ENCODE measurements at regions of chr4 and their contacts with region 1.

Region 1: DNA sequence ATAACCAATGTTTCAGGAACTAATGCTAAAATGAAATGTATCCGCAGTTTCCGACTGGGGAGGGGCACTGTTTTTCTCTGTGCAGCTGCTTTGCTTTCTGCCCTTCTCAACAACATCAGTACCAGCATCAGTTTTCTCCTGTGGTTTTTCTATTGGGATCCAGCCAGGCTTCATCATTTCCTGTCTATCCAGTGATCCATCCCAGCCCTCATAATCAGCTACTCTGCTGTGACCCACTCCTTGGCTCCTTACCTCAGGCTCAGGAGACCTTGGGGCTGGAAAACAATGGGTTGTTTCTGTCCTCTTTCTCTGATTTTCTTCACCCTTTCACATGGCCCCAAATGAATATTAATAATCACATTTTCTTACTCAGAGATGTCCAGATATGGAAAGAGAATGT is 222.2 kb upstream of the DKK2 start:
- DNase-seq: no peak
- H3K4me3 Mint-ChIP-seq: no peak overlapping the region
- H3K27ac Mint-ChIP-seq: no peak overlapping the region
- H3K4me1 Mint-ChIP-seq: no peaks in the 10 kb centered on the region
- H3K27me3 Mint-ChIP-seq: no peaks in the 10 kb centered on the region
- CTCF ChIP-seq: no peak

Region 2: DNA sequence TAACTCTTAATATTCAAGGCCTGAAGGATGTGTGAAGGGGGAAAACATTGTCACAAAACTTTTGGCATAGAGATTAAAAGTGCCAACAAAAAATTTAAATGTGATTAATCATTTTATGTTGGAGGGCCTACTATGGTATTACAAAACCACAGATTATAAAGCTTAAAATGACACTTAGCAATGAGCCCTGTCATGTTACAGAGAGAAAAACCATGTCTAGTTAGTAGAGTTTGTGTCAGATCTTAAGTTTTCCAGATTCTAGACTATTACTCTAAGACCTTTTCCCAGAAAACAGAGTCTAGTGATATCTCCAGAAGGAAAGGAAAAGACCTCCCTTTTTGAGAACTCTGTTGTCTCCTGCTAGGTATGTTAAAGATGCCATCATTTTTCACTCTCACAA is 16.9 kb after region 1 on chr4:
- CTCF ChIA-PET with region 1: no interaction called
- intact Hi-C with region 1: loop called (anchors 1 kb)
- DNase-seq: no peak
- H3K4me3 Mint-ChIP-seq: no peak overlapping the region
- H3K27ac Mint-ChIP-seq: no peak overlapping the region
- H3K4me1 Mint-ChIP-seq: peaks cover 9% of the 10 kb centered on the region
- H3K27me3 Mint-ChIP-seq: no peaks in the 10 kb centered on the region
- CTCF ChIP-seq: no peak

Region 3: GRCh38 chr4:107419052-107419451 is 160.7 kb after region 1 on chr4:
- CTCF ChIA-PET with region 1: no interaction called
- intact Hi-C with region 1: no loop called
- DNase-seq: no peak
- H3K4me3 Mint-ChIP-seq: no peak overlapping the region
- H3K27ac Mint-ChIP-seq: no peak overlapping the region
- H3K4me1 Mint-ChIP-seq: peaks cover 7% of the 10 kb centered on the region
- H3K27me3 Mint-ChIP-seq: no peaks in the 10 kb centered on the region
- CTCF ChIP-seq: no peak